Activated CD8-positive, alpha-beta T cell treated with anti-CD3 and anti-CD28 coated beads for 36 hours (primary cell): ENCODE measurements at regions of chr19 and their contacts with region 1.

Region 1: GRCh38 chr19:55653758-55654539 is 886 bp upstream of the U2AF2 start:
- DNase-seq: peak; percentile 100
- ATAC-seq: peak; percentile 81
- H3K4me3 Mint-ChIP-seq: peak overlapping the region; percentile 98
- H3K27ac Mint-ChIP-seq: peak overlapping the region; percentile 99
- H3K4me1 Mint-ChIP-seq: peaks cover 41% of the 10 kb centered on the region
- H3K27me3 Mint-ChIP-seq: no peaks in the 10 kb centered on the region
- CTCF ChIP-seq: peak; percentile 99

Region 2: DNA sequence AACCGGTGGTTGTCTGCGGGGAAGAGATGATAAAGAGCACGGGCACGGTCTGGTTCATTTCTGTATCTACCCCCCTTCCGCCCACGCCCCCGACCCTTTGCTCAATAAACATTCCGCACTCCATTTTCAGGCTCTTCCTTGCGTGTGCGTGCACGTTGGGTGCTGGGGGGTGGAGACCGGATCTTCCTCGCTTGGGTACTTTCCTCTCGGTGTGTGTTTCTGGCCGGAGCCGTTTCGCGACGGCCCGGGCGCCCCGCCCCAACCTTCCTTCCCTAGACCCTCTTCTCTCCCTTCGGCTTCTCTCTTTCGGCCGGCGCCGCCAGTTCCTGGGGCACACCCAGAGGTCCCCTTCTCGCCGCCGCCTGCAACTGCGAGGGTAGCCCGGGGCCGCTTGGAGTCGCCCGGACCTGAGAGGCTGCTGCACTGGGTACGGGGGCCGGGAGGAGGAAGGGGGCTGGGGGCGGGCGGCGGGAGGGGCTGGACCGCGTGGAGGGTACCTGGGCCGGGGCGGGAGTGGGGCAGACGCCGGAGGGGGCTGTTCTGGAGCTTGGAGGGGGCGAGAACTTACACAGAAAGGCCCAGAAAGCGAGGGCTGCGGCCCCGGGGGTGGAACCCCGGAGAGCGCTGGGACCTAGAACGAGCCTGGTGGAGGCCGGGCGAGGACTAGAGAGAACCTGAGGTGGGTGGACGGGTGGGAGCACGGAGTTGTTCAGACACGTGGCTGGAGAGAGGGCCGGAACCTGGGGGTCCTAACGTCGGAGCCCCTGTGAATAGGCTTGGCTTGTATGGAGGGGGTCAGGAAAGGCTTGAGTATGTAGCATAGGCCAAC is 10.4 kb before region 1 on chr19 and contains the start of gene ZNF581:
- CTCF ChIA-PET with region 1: interaction called, 45 read pairs
- POLR2A ChIA-PET with region 1: interaction called, 12 read pairs
- intact Hi-C with region 1: no loop called
- DNase-seq: peak; percentile 94
- ATAC-seq: peak; percentile 57
- H3K4me3 Mint-ChIP-seq: peak within 1 kb of the TSS; percentile 82
- H3K27ac Mint-ChIP-seq: peak within 1 kb of the TSS; percentile 99
- H3K4me1 Mint-ChIP-seq: peaks cover 44% of the 10 kb centered on the region
- H3K27me3 Mint-ChIP-seq: no peaks in the 10 kb centered on the region
- CTCF ChIP-seq: no peak
- total RNA-seq, gene ZNF581: 30.4 to 34.5 TPM

Region 3: GRCh38 chr19:55674841-55675660 is 21.1 kb after region 1 on chr19 and contains the start of gene EPN1:
- CTCF ChIA-PET with region 1: interaction called, 8 read pairs
- POLR2A ChIA-PET with region 1: interaction called, 57 read pairs
- intact Hi-C with region 1: no loop called
- DNase-seq: peak; percentile 98
- ATAC-seq: peak; percentile 94
- H3K4me3 Mint-ChIP-seq: peak within 1 kb of the TSS; percentile 96
- H3K27ac Mint-ChIP-seq: peak within 1 kb of the TSS; percentile 96
- H3K4me1 Mint-ChIP-seq: peaks cover 60% of the 10 kb centered on the region
- H3K27me3 Mint-ChIP-seq: no peaks in the 10 kb centered on the region
- CTCF ChIP-seq: no peak
- total RNA-seq, gene EPN1: 36.2 to 37.7 TPM

Region 4: DNA sequence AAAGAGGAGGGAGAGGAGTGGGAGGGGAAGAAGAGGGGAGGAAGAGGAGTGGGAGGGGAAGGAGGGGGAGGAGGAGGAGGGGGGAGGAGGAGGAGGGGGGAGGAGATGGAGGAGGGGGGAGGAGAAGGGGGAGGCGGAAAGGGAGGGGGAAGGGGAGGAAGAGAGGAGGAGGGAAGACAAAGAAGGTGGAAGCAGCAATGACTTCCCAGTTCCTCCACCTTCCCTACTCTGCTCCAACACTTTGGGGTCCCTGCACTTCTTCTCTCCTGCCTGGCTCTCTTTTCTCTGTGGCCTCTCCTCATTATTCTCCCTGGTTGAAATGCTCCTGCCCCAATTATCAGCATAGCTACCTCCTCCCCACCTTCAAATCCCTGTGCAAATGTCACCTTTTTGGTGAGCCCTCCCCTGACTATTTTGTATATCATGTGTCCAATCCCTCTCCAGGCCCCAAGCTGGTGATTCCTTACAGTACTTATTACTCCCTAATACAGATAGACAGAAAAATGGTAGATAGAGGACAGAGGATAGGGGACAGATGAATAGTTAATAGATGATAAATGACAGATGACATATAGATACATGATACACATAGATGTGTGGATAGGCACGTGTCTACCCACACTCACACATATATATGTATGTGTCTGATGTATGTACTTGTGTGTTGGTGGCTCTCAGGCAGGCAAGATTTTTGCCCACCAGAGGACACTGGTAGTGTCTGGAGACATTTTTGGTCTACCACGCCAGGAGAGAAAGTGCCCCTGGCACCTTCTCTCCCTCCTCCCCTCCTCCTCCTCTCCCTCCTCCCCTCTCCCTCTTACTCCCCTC is 59.1 kb after region 1 on chr19:
- CTCF ChIA-PET with region 1: no interaction called
- POLR2A ChIA-PET with region 1: no interaction called
- intact Hi-C with region 1: no loop called
- DNase-seq: no peak
- ATAC-seq: peak; percentile 75
- H3K4me3 Mint-ChIP-seq: no peak overlapping the region
- H3K27ac Mint-ChIP-seq: no peak overlapping the region
- H3K4me1 Mint-ChIP-seq: peaks cover 2% of the 10 kb centered on the region
- H3K27me3 Mint-ChIP-seq: peaks cover 15% of the 10 kb centered on the region
- CTCF ChIP-seq: no peak